ENCODE measurements at regions of chr10 and their contacts with region 1.

Region 1: DNA sequence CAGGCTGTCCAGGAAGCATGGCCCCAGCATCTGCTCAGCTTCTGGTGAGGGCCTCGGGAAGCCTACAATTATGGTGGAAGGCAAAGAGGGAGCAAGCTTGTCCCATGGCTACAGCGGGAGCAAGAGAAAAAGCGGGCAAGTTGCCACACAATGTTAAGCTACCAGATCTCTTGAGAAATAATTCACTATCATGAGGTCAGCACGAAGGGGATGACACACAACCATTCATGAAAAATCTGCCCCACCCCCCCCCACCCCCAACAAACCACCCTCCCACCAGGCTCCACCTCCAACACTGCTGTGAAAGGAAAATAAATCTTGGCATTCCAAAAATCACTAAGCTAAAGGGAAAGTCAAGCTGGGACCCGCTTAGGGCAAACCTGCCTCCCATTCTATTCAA is 545.8 kb upstream of the NRP1 start:
- DNase-seq: no peak
- H3K4me3 ChIP-seq: no peak overlapping the region
- H3K27ac ChIP-seq: no peak overlapping the region
- H3K4me1 ChIP-seq: no peaks in the 10 kb centered on the region
- H3K27me3 ChIP-seq: no peaks in the 10 kb centered on the region
- CTCF ChIP-seq: no peak
- EP300 ChIP-seq: no peak
- POLR2A ChIP-seq: no peak

Region 2: GRCh38 chr10:33791267-33791650 is 89.0 kb before region 1 on chr10:
- intact Hi-C with region 1: no loop called
- DNase-seq: no peak
- H3K4me3 ChIP-seq: no peak overlapping the region
- H3K27ac ChIP-seq: no peak overlapping the region
- H3K4me1 ChIP-seq: no peaks in the 10 kb centered on the region
- H3K27me3 ChIP-seq: no peaks in the 10 kb centered on the region
- CTCF ChIP-seq: no peak
- EP300 ChIP-seq: no peak
- POLR2A ChIP-seq: no peak

Region 3: DNA sequence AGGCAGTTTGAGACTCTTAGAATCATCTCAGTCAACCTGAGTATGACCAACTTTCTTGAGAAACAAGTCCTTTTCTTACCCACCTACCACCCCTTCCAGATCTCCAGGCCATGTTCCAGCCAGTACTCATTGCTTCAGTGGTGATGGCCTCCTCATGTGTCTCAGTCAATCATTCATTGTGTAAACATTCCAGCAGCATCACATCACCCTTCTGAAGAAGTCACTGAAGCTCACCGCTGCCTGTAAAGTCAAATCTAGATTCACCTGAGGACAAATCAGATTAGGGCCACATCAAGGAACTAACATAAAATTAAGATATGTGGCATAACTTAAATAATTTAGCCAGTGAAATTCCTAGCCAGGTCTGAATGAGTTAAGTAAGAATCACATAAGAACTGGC is 78.5 kb before region 1 on chr10:
- intact Hi-C with region 1: no loop called
- DNase-seq: no peak
- H3K4me3 ChIP-seq: no peak overlapping the region
- H3K27ac ChIP-seq: no peak overlapping the region
- H3K4me1 ChIP-seq: peaks cover 0 to 13% (median 4%) of the 10 kb centered on the region in 4 donors
- H3K27me3 ChIP-seq: no peaks in the 10 kb centered on the region
- CTCF ChIP-seq: no peak
- EP300 ChIP-seq: no peak
- POLR2A ChIP-seq: no peak

Region 4: GRCh38 chr10:33975481-33975880 is 95.2 kb after region 1 on chr10:
- intact Hi-C with region 1: no loop called
- DNase-seq: peak in 1 of 2 donors; percentile 12
- H3K4me3 ChIP-seq: no peak overlapping the region
- H3K27ac ChIP-seq: no peak overlapping the region
- H3K4me1 ChIP-seq: no peaks in the 10 kb centered on the region
- H3K27me3 ChIP-seq: no peaks in the 10 kb centered on the region
- CTCF ChIP-seq: no peak
- EP300 ChIP-seq: no peak
- POLR2A ChIP-seq: no peak

Region 5: DNA sequence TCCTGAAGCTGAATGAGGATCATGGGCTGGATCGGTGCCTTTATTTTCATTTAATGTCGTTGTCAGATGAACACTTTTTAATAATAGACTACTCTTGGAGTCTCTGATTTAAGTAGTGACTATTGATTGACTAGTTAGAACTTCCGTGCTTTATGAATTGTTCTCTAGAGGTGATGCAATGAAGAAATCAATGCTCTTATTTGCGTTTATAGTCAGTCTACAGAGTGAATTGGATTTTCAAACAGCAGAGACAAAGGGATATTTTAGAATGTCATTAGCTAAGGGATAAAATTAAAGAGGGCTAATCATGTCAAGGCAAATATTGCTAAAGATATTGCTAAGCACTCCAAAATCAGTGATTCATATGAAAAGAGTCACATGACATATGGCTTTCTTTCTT is 106.2 kb after region 1 on chr10:
- intact Hi-C with region 1: no loop called
- DNase-seq: no peak
- H3K4me3 ChIP-seq: no peak overlapping the region
- H3K27ac ChIP-seq: no peak overlapping the region
- H3K4me1 ChIP-seq: no peaks in the 10 kb centered on the region
- H3K27me3 ChIP-seq: no peaks in the 10 kb centered on the region
- CTCF ChIP-seq: no peak
- EP300 ChIP-seq: no peak
- POLR2A ChIP-seq: no peak

Region 6: GRCh38 chr10:34454590-34455261 is 574.4 kb after region 1 on chr10:
- intact Hi-C with region 1: loop called (anchors 5 kb)
- DNase-seq: peak in 1 of 2 donors; percentile 12
- H3K4me3 ChIP-seq: no peak overlapping the region
- H3K27ac ChIP-seq: no peak overlapping the region
- H3K4me1 ChIP-seq: no peaks in the 10 kb centered on the region
- H3K27me3 ChIP-seq: no peaks in the 10 kb centered on the region
- CTCF ChIP-seq: no peak
- EP300 ChIP-seq: no peak
- POLR2A ChIP-seq: no peak

Measured in stomach (tissue), 19 donors.